ENCODE measurements at regions of chr11 and their contacts with region 1.

Region 1: DNA sequence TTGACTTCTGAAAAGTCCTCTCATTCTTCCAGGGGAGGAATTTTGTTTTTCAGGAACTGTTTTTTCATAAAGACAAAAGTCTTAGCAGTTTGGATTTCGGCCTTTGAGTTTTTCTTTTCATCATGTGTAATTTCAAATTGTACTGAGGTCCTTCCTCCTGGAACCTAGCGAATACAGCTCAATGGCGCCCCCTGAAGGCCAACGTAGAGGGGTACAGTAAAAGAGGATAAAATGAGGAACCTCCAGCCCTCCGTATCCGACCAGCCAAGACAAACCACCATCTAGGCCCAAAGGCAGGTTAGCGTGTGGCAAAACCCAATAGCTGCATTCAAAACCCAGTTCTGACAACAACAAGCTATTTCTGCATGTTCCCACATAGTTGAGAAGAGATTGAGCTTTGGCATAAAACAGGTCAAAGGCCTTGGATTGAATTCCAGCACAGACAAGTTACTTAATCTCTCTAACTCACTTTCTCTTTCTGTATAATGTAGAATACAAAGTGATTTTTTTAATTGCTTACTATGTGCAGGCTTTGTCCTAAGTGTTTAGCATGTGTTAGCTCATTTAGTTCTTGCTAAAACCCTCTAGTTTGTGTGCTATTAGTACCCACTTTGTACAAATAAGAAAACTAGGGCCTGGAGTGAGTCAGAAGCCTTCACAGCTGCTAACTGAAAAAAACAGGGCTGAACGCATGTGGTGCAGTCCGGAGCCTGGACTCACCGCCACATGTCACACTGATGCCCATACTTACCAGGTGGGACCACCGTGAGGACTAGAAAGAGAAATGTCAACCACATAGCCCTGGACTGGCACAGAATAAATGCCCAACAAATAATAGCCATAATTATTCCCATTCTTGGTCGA is 43.2 kb upstream of the ETS1 start:
- DNase-seq: peak; percentile 31
- H3K4me3 ChIP-seq: no peak overlapping the region
- CTCF ChIP-seq: peak; percentile 66

Region 2: DNA sequence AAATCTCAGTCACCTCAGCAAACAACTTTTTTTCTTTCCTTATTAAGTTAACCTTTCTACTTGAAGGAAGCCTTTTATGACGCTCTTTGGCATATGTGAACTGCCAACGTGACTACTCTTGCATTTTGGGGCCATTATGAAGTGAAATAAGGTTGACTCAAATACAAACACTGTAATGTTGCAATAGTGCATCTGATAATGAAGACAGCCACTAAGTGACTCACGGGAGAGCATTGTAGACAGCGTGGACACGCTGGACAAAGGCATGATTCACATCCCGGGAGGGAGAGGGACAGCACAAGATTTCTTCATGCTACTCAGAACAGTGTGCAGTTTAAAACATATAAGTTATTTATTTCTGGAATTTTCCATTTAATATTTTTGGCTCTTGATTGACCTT is 604.0 kb before region 1 on chr11:
- CTCF ChIA-PET with region 1: interaction called, 15 read pairs
- POLR2A ChIA-PET with region 1: no interaction called
- DNase-seq: peak; percentile 89
- H3K4me3 ChIP-seq: no peak overlapping the region
- CTCF ChIP-seq: no peak

Region 3: GRCh38 chr11:128290106-128290840 is 340.3 kb before region 1 on chr11:
- CTCF ChIA-PET with region 1: interaction called, 209 read pairs
- POLR2A ChIA-PET with region 1: interaction called, 3 read pairs
- DNase-seq: peak; percentile 69
- H3K4me3 ChIP-seq: no peak overlapping the region; the same call in 1 of the 2 replicates
- CTCF ChIP-seq: peak; percentile 65

Region 4: DNA sequence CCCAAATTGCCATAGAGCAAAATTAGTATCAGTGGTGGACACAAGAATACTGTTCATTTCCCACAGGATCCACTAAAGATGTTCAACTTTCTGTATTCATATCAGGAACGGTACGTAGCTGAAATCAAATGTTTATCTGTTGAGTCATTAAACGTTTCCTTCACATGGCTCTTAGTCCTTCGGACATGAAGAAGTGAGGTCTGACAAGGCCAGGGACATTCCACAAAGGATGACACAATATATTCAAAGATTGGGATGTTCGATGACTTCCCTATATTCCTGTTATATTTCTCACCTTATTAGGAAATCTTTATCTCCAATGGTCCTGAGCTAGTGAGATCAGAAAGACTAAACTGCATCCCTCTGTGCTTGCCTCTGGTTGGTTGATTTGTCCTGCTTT is 172.3 kb before region 1 on chr11:
- CTCF ChIA-PET with region 1: interaction called, 39 read pairs
- POLR2A ChIA-PET with region 1: no interaction called
- DNase-seq: peak; percentile 88
- H3K4me3 ChIP-seq: no peak overlapping the region
- CTCF ChIP-seq: no peak

Region 5: GRCh38 chr11:128488471-128488870 is 142.1 kb before region 1 on chr11:
- CTCF ChIA-PET with region 1: interaction called, 25 read pairs
- POLR2A ChIA-PET with region 1: no interaction called
- DNase-seq: no peak
- H3K4me3 ChIP-seq: no peak overlapping the region
- CTCF ChIP-seq: no peak

Region 6: DNA sequence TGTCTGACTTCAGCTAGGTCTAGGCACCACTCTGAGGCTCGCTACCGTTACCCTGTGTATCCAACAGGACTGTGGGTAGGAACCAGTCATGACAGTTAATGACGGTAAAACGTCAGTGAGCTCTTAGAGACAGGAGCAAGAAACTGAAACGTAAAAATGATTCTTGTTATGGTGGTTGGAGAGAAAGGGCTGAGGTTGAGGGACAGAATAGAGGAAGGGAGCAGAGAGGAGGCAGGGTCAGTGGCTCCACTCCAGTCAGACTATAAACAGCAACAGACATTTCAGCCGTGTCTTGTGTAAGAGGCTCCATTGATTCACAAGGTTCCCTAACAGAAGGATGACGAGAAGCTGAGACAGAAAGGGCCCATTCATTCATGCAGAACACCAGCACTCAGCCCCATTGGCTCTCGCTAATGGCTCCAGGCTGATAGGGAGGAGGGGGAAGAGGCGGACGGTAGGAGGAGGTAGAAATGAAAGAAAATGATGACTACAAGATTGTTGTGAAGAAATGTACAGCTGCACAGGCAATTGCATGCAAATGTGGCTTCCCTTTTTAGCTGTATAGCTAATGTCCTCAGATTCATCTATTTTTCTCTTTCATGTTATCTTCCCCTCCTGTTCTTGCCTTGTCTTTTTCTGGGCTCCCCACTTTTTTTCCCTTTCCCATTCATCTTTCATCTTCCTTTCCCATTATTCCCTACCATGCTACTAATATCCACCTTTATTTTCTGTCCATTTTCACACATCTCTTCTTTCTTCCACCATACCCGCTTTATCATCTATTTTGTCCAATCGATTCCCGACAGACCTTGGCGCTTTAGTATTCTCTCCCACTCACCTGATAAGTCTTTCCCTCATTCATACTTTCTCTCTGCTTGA is 77.6 kb before region 1 on chr11:
- CTCF ChIA-PET with region 1: interaction called, 54 read pairs
- POLR2A ChIA-PET with region 1: no interaction called
- DNase-seq: no peak
- H3K4me3 ChIP-seq: no peak overlapping the region
- CTCF ChIP-seq: no peak

Region 7: GRCh38 chr11:128653801-128654231 is 23.2 kb after region 1 on chr11:
- CTCF ChIA-PET with region 1: interaction called, 39 read pairs
- POLR2A ChIA-PET with region 1: no interaction called
- DNase-seq: peak; percentile 51
- H3K4me3 ChIP-seq: no peak overlapping the region
- CTCF ChIP-seq: no peak